ENCODE measurements at regions of chr22 and their contacts with region 1.

Region 1: DNA sequence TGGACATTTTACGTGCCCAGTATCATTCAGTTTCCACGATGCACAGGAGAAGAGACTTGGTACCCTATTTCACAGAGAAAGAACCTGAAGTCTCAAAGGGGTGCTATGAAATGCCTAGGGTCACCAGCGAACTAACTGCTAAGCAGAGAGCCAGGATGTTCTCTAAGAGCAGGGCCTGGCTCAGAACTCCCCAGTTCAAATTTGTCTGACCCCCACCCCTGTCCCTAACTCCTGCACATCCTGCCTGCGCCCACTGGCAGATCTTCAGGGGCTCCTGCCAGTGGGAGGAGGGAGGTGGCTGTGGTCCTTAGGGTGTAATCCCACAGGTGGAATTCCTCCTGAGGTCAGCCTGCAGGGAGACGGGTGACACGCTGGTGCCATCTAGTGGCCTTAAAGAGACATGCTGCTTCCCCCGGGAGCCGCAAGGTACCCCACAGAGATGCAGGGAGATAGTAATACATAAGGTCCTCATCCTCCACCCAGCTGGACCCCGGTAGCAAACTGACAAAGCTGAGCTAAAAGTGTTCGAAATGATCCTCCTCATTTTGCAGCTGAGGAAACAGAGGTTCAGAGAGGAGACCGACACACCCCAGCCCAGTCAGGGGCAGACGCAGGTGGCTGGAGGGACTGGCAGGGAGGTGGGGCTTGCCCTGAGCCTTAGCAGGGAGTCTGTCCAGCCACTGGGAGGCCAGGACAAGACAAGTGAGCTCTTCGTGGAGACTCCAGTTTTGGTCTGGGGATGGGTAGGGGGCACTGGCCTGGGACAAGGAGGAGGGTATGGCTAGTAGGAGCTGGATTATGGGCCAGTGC is 34.1 kb downstream of the MB start:
- H3K4me3 ChIP-seq: no peak overlapping the region
- H3K27ac ChIP-seq: no peak overlapping the region
- H3K4me1 ChIP-seq: no peaks in the 10 kb centered on the region
- CTCF ChIP-seq: peak; percentile 78

Region 2: GRCh38 chr22:35430897-35431322 is 152.2 kb before region 1 on chr22:
- CTCF ChIA-PET with region 1: interaction called, 103 read pairs
- POLR2A ChIA-PET with region 1: no interaction called
- H3K4me3 ChIP-seq: no peak overlapping the region
- H3K27ac ChIP-seq: no peak overlapping the region
- H3K4me1 ChIP-seq: no peaks in the 10 kb centered on the region
- CTCF ChIP-seq: 0 out of 2 replicates have a peak, but pooled peaks have one; percentile 21

Region 3: GRCh38 chr22:35510481-35510934 is 72.6 kb before region 1 on chr22:
- CTCF ChIA-PET with region 1: interaction called, 10 read pairs
- POLR2A ChIA-PET with region 1: no interaction called
- H3K4me3 ChIP-seq: no peak overlapping the region
- H3K27ac ChIP-seq: no peak overlapping the region
- H3K4me1 ChIP-seq: no peaks in the 10 kb centered on the region
- CTCF ChIP-seq: no peak

Region 4: GRCh38 chr22:35539910-35540594 is 43.0 kb before region 1 on chr22:
- CTCF ChIA-PET with region 1: interaction called, 18 read pairs
- POLR2A ChIA-PET with region 1: no interaction called
- H3K4me3 ChIP-seq: peak overlapping the region; percentile 56
- H3K27ac ChIP-seq: peak overlapping the region; percentile 28; the same call in 1 of the 2 replicates
- H3K4me1 ChIP-seq: no peaks in the 10 kb centered on the region; the same call in 1 of the 2 replicates
- CTCF ChIP-seq: no peak

Region 5: GRCh38 chr22:35561796-35562526 is 21.1 kb before region 1 on chr22:
- CTCF ChIA-PET with region 1: interaction called, 11 read pairs
- POLR2A ChIA-PET with region 1: no interaction called
- H3K4me3 ChIP-seq: peak overlapping the region; percentile 1
- H3K27ac ChIP-seq: no peak overlapping the region
- H3K4me1 ChIP-seq: peaks cover 9% of the 10 kb centered on the region
- CTCF ChIP-seq: no peak

Region 6: DNA sequence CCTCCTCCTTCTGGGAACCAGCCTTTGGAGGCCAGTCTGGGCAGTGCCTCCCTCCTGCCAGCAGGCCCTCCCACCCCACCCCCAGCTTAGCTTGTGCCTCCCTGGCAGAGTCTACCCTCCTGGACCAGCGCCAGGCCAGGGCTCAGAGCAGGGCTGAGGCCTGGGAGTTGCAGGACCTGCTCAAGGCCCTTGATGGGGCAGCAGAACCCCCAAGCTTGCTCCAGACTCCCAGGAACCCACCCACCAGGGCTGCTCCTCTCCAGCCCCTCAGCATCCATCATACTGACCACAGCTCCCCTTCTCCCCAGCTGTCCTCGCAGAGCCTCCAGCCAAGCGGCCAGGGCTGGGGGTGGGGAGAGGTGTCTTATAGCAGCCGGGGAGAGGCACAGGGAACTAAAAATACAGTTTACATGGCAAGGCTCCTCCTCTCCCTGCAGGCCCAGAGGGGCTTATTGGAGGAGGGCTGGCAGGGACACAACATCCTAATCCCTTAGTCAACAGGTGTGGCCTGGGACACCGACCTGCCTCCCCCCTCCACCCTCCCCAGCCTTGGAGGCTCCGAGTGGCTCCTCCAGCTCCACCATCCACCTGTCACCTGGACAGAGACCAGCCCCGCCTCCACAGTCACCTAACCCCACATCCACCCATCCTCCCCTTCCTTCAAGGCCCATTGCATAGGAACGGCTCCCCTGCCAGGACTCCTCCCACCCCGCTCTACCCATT is 39.3 kb after region 1 on chr22:
- CTCF ChIA-PET with region 1: interaction called, 11 read pairs
- POLR2A ChIA-PET with region 1: no interaction called
- H3K4me3 ChIP-seq: no peak overlapping the region
- H3K27ac ChIP-seq: no peak overlapping the region
- H3K4me1 ChIP-seq: no peaks in the 10 kb centered on the region
- CTCF ChIP-seq: no peak

Measured in HEK293 (cell line).